ENCODE measurements at regions of chrX and their contacts with region 1.

Region 1: DNA sequence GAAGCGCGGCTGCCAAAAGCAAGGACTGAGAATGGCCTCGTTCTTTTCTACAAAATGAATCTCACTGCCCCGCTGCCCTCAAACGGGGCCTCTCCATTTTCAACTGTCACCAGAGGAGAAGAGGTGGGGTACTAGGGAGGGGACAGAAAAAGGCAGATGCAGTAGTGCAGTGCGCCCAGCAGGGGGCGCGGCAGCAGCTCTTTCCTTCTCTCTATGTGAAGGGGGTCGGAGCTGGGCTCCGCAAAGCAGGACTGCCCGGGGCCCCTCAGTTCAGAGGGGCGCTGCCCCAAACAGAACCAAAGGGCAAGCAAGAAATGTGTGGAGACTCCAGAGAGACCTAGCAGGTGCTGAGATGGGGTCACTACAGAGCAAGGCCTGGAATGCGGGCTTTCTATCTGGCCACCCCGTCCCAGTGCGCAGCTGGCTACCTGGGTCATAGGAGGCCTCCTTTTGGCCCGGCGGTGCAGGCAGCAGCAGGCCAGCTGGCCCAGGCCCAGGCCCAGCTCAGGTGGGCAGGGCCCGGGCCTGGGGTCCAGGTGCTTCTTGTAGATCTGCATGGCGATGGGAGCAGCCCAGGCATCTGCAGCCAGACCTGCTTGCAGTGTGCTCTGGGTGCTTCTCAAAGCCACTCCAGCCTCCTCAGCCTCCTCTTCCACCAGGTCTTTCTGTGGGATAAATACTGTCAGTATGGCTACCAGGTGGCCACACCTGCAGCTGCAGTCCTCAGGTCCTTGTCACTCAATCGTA is 5.9 kb downstream of the IRAK1 start:
- DNase-seq: peak; percentile 46
- H3K4me3 Mint-ChIP-seq: no peak overlapping the region
- H3K27ac Mint-ChIP-seq: peak overlapping the region; percentile 41
- H3K4me1 Mint-ChIP-seq: peaks cover 10% of the 10 kb centered on the region
- H3K27me3 Mint-ChIP-seq: no peaks in the 10 kb centered on the region

Region 2: GRCh38 chrX:153938226-153938786 is 75.5 kb before region 1 on chrX:
- CTCF ChIA-PET with region 1: no interaction called
- intact Hi-C with region 1: no loop called
- DNase-seq: no peak
- H3K4me3 Mint-ChIP-seq: no peak overlapping the region
- H3K27ac Mint-ChIP-seq: peak overlapping the region; percentile 56
- H3K4me1 Mint-ChIP-seq: peaks cover 25% of the 10 kb centered on the region
- H3K27me3 Mint-ChIP-seq: no peaks in the 10 kb centered on the region

Region 3: GRCh38 chrX:153989973-153990655 is 23.7 kb before region 1 on chrX:
- CTCF ChIA-PET with region 1: interaction called, 12 read pairs
- intact Hi-C with region 1: no loop called
- DNase-seq: no peak
- H3K4me3 Mint-ChIP-seq: peak overlapping the region; percentile 39
- H3K27ac Mint-ChIP-seq: no peak overlapping the region
- H3K4me1 Mint-ChIP-seq: peaks cover 17% of the 10 kb centered on the region
- H3K27me3 Mint-ChIP-seq: no peaks in the 10 kb centered on the region

Region 4: GRCh38 chrX:154051201-154051810 is 37.5 kb after region 1 on chrX:
- CTCF ChIA-PET with region 1: interaction called, 10 read pairs
- intact Hi-C with region 1: loop called (anchors 1 kb)
- DNase-seq: peak; percentile 81
- H3K4me3 Mint-ChIP-seq: no peak overlapping the region
- H3K27ac Mint-ChIP-seq: peak overlapping the region; percentile 39
- H3K4me1 Mint-ChIP-seq: peaks cover 32% of the 10 kb centered on the region
- H3K27me3 Mint-ChIP-seq: no peaks in the 10 kb centered on the region